ENCODE measurements at regions of chr2 and their contacts with region 1.

Region 1: DNA sequence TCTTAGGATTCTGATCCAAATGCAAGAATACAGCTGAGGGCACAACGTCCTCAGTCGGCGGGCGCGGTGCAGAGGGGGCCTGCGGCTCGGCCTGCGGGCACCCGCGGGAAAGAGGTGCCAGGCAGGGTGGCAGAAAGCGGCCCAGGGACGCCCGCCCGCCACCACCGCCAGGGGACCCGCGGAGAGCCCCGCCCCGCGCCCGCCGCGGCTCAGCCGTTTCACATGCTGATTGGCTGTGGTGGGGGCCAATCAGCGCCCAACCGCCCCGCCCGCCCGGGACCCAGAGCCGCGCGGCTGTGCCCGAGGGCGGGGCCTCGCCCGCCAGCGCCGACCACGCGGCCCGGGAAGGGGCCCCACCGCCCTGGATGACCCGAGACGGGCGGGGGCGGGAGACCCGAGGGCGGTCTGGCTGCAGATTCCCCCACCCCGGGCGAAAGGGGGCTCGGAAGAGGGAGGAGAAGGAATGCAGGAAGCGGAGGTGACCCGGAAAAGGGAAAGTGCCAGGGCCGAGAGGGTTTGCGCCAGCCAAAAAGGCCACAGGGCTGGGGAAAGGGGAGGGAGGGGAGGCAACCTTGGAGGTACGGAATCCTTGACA is 8.0 kb downstream of the IRS1 start:
- DNase-seq: peak; percentile 93 to 96 (median 95)
- ATAC-seq: peak; percentile 78 to 96 (median 90)
- H3K4me3 ChIP-seq: peak overlapping the region; percentile 43 to 97 (median 76)
- H3K27ac ChIP-seq: peak overlapping the region; percentile 88 to 98 (median 94)
- H3K4me1 ChIP-seq: peaks cover 0 to 88% (median 71%) of the 10 kb centered on the region in 12 donors
- H3K27me3 ChIP-seq: no peaks in the 10 kb centered on the region
- CTCF ChIP-seq: peak; percentile 10 to 65 (median 42)
- POLR2A ChIP-seq: peak in 1 of 2 donors; percentile 81

Region 2: GRCh38 chr2:226337941-226338600 is 453.5 kb before region 1 on chr2:
- intact Hi-C with region 1: no loop called
- DNase-seq: no peak
- ATAC-seq: peak in 3 of 4 donors; percentile 28 to 59 (median 32)
- H3K4me3 ChIP-seq: no peak overlapping the region
- H3K27ac ChIP-seq: peak overlapping the region in 6 of 12 donors; percentile 16 to 67 (median 34)
- H3K4me1 ChIP-seq: peaks cover 0 to 9% (median 0%) of the 10 kb centered on the region in 12 donors
- H3K27me3 ChIP-seq: no peaks in the 10 kb centered on the region
- CTCF ChIP-seq: no peak
- POLR2A ChIP-seq: no peak

Region 3: DNA sequence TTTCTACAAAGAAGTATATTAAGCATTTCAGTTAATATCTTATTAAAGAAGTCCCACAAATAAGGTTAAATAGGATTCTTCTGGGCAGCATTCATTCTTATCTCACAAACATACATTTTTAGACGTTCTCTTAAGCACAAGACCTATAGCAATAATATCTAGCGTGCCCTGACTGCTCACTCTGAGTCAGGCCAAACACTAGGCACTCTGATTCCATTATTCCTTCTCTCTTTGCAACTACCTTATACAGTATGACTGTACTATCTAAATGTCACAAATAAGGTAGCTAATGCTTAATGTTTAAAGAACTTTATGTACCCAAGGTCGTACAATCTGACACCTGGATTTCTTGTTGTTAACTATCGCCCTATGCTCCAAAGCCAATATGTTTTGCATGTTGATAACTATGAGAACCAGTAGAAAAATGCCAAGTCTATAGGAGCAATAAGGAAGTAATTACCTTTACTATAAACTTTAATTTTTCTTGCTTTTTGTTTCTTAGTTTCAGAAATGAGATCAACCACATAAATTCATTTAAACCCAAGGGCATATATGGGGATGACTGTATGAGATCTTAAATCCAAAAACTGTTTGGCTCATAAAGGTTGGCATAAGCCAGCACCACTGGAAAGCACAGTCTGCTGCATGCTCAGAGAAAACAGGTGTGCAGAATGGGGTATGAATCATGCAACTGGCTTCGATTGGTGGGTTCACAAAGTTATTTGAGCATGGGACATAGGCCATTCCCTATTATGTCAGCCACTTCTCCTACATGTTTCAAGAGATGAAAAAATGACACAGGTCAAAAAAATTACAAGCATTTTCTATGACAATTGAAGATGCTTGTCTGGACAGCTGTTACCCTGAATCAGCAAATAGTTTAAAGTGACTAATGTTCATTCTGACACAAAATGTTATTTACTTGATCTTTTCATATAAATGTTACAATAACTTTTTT is 344.0 kb before region 1 on chr2:
- intact Hi-C with region 1: loop called in 6 of 10 experiments (anchors 5 to 10 kb)
- DNase-seq: no peak
- ATAC-seq: peak in 1 of 4 donors; percentile 19
- H3K4me3 ChIP-seq: no peak overlapping the region
- H3K27ac ChIP-seq: peak overlapping the region in 5 of 12 donors; percentile 17 to 61 (median 54)
- H3K4me1 ChIP-seq: peaks cover 0 to 33% (median 10%) of the 10 kb centered on the region in 12 donors
- H3K27me3 ChIP-seq: no peaks in the 10 kb centered on the region
- CTCF ChIP-seq: no peak
- POLR2A ChIP-seq: no peak

Region 4: GRCh38 chr2:226554701-226555100 is 236.9 kb before region 1 on chr2:
- intact Hi-C with region 1: loop called in 3 of 10 experiments (anchors 5 to 10 kb)
- DNase-seq: no peak
- ATAC-seq: no peak
- H3K4me3 ChIP-seq: no peak overlapping the region
- H3K27ac ChIP-seq: no peak overlapping the region
- H3K4me1 ChIP-seq: peaks cover 0 to 9% (median 0%) of the 10 kb centered on the region in 12 donors
- H3K27me3 ChIP-seq: peaks cover 0 to 5% (median 0%) of the 10 kb centered on the region in 9 donors
- CTCF ChIP-seq: no peak
- POLR2A ChIP-seq: no peak

Region 5: DNA sequence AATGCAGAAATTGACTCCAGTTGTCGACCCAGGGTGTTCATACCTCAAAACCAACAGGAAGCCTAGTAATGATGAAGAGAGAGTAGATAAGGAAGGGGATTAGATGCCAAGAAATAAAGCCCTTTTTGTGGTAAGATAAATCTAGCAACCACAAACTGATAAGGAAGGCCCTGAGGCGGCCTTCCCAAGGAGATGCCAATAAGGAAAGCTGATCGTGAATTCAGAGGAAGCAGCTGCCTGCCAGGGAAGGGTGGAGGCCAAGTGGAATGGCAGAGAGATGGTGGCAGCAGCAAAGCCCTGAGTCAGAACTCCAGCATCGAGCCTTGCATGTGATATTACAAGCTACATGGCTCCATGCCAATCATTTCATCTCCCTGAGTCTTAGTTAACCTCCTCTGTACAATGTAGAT is 118.3 kb before region 1 on chr2:
- intact Hi-C with region 1: loop called in 1 of 10 experiments (anchors 10 kb)
- DNase-seq: peak in 1 of 5 donors; percentile 43
- ATAC-seq: peak in 3 of 4 donors; percentile 29 to 74 (median 61)
- H3K4me3 ChIP-seq: no peak overlapping the region
- H3K27ac ChIP-seq: peak overlapping the region in 11 of 12 donors; percentile 20 to 80 (median 55)
- H3K4me1 ChIP-seq: peaks cover 0 to 39% (median 20%) of the 10 kb centered on the region in 12 donors
- H3K27me3 ChIP-seq: no peaks in the 10 kb centered on the region
- CTCF ChIP-seq: no peak
- POLR2A ChIP-seq: no peak

Region 6: GRCh38 chr2:226699321-226699720 is 92.3 kb before region 1 on chr2:
- intact Hi-C with region 1: loop called in 4 of 10 experiments (anchors 5 to 10 kb)
- DNase-seq: peak; percentile 62 to 89 (median 73)
- ATAC-seq: peak; percentile 80 to 97 (median 92)
- H3K4me3 ChIP-seq: no peak overlapping the region
- H3K27ac ChIP-seq: peak overlapping the region in 3 of 12 donors; percentile 10 to 39 (median 26)
- H3K4me1 ChIP-seq: peaks cover 0 to 15% (median 7%) of the 10 kb centered on the region in 12 donors
- H3K27me3 ChIP-seq: no peaks in the 10 kb centered on the region
- CTCF ChIP-seq: peak in 4 of 12 donors; percentile 11 to 31 (median 18)
- POLR2A ChIP-seq: no peak

Region 7: GRCh38 chr2:226733189-226733858 is 58.3 kb before region 1 on chr2:
- intact Hi-C with region 1: loop called in 8 of 10 experiments (anchors 5 to 10 kb)
- DNase-seq: no peak
- ATAC-seq: peak in 3 of 4 donors; percentile 54 to 68 (median 64)
- H3K4me3 ChIP-seq: no peak overlapping the region
- H3K27ac ChIP-seq: peak overlapping the region in 11 of 12 donors; percentile 2 to 58 (median 24)
- H3K4me1 ChIP-seq: peaks cover 0 to 34% (median 15%) of the 10 kb centered on the region in 12 donors
- H3K27me3 ChIP-seq: no peaks in the 10 kb centered on the region
- CTCF ChIP-seq: no peak
- POLR2A ChIP-seq: no peak

Region 8: GRCh38 chr2:226758921-226759640 is 32.5 kb before region 1 on chr2:
- intact Hi-C with region 1: loop called in 2 of 10 experiments (anchors 5 kb)
- DNase-seq: no peak
- ATAC-seq: peak in 3 of 4 donors; percentile 56 to 75 (median 71)
- H3K4me3 ChIP-seq: no peak overlapping the region
- H3K27ac ChIP-seq: peak overlapping the region; percentile 5 to 81 (median 57)
- H3K4me1 ChIP-seq: peaks cover 3 to 79% (median 41%) of the 10 kb centered on the region in 12 donors
- H3K27me3 ChIP-seq: no peaks in the 10 kb centered on the region
- CTCF ChIP-seq: no peak
- POLR2A ChIP-seq: no peak